CD8-positive, alpha-beta memory T cell (primary cell): ENCODE measurements at regions of chr6 and their contacts with region 1.

Region 1: GRCh38 chr6:71349395-71349794 is 60.8 kb downstream of the OGFRL1 start:
- DNase-seq: peak in 2 of 5 donors; percentile 17 to 18
- H3K4me3 ChIP-seq: no peak overlapping the region
- H3K4me3 Mint-ChIP-seq: no peak overlapping the region
- H3K27ac ChIP-seq: no peak overlapping the region
- H3K27ac Mint-ChIP-seq: no peak overlapping the region
- H3K4me1 ChIP-seq: no peaks in the 10 kb centered on the region
- H3K4me1 Mint-ChIP-seq: no peaks in the 10 kb centered on the region
- H3K27me3 ChIP-seq: no peaks in the 10 kb centered on the region
- H3K27me3 Mint-ChIP-seq: peaks cover 0 to 1% of the 10 kb centered on the region in 2 donors

Region 2: GRCh38 chr6:71190809-71191208 is 158.6 kb before region 1 on chr6:
- CTCF ChIA-PET with region 1: interaction called, 24 read pairs
- POLR2A ChIA-PET with region 1: no interaction called
- DNase-seq: peak in 1 of 5 donors; percentile 4
- H3K4me3 ChIP-seq: no peak overlapping the region
- H3K4me3 Mint-ChIP-seq: no peak overlapping the region
- H3K27ac ChIP-seq: no peak overlapping the region
- H3K27ac Mint-ChIP-seq: no peak overlapping the region
- H3K4me1 ChIP-seq: no peaks in the 10 kb centered on the region
- H3K4me1 Mint-ChIP-seq: no peaks in the 10 kb centered on the region
- H3K27me3 ChIP-seq: no peaks in the 10 kb centered on the region
- H3K27me3 Mint-ChIP-seq: peaks cover 4 to 7% of the 10 kb centered on the region in 2 donors

Region 3: DNA sequence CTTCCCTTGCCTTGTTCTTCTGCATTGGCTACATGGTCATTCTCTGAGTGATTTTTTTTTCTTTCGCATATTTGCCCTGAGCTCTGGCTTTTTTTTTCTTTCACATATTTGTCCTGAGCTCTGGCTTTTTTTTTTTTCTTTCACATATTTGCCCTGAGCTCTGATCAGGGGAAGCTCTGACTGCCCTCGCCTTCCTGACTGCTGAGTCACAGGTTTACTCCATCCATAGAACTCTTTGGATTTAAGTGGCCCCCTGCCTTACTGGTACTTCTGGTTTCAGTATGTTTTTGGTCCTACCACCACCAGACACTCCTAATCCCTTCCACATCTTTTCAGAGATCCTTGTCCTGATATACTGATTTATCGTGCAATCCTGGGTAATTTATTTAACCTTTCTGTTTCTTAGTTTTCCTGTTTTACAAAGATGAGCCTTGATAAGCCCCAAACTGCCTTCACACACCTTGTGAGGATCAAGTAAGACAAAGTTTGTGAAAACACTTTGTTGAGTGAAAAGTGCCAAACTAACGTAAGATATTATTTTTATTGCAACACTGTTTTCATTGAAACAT is 140.4 kb after region 1 on chr6:
- CTCF ChIA-PET with region 1: no interaction called
- POLR2A ChIA-PET with region 1: no interaction called
- DNase-seq: no peak
- H3K4me3 ChIP-seq: no peak overlapping the region
- H3K4me3 Mint-ChIP-seq: no peak overlapping the region
- H3K27ac ChIP-seq: no peak overlapping the region
- H3K27ac Mint-ChIP-seq: no peak overlapping the region
- H3K4me1 ChIP-seq: no peaks in the 10 kb centered on the region
- H3K4me1 Mint-ChIP-seq: no peaks in the 10 kb centered on the region
- H3K27me3 ChIP-seq: no peaks in the 10 kb centered on the region
- H3K27me3 Mint-ChIP-seq: peaks cover 0 to 2% of the 10 kb centered on the region in 2 donors

Region 4: DNA sequence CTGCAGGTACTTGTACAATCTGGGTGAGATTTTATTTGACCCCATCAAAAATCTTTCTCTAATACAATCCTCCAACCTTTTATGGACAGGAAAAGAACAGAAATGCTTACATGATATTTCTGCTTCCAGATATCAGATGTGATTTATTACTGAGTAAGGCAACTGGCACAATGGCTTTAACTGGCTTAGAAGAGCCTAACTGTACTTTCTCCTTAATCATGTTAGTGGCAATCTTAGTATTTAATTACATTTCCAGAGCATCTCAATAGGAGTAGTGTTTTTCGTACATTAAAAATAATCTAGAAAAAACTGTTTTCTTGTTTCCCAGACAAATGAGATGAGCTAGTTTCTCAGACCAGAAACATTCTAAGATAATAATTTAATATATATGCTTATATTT is 1524.0 kb after region 1 on chr6:
- CTCF ChIA-PET with region 1: no interaction called
- POLR2A ChIA-PET with region 1: interaction called, 10 read pairs
- DNase-seq: no peak
- H3K4me3 ChIP-seq: no peak overlapping the region
- H3K4me3 Mint-ChIP-seq: no peak overlapping the region
- H3K27ac ChIP-seq: no peak overlapping the region
- H3K27ac Mint-ChIP-seq: no peak overlapping the region
- H3K4me1 ChIP-seq: no peaks in the 10 kb centered on the region
- H3K4me1 Mint-ChIP-seq: no peaks in the 10 kb centered on the region
- H3K27me3 ChIP-seq: no peaks in the 10 kb centered on the region
- H3K27me3 Mint-ChIP-seq: no peaks in the 10 kb centered on the region